ENCODE measurements at regions of chr5 and their contacts with region 1.

Region 1: GRCh38 chr5:98768160-98769005 is 5.1 kb upstream of the RGMB start:
- DNase-seq: peak; percentile 70 to 82
- H3K4me3 ChIP-seq: peak overlapping the region; percentile 52 to 91 (median 82)
- H3K27ac ChIP-seq: no peak overlapping the region
- H3K4me1 ChIP-seq: peaks cover 0 to 15% (median 9%) of the 10 kb centered on the region in 4 experiments; a peak in 5 of 7 replicates
- H3K27me3 ChIP-seq: peaks cover 0 to 19% (median 13%) of the 10 kb centered on the region in 4 experiments; a peak in 6 of 7 replicates
- CTCF ChIP-seq: peak; percentile 67 to 96 (median 72)
- EP300 ChIP-seq: no peak
- POLR2A ChIP-seq: no peak
- RAD21 ChIP-seq: peak; percentile 91 to 94

Region 2: GRCh38 chr5:98433022-98433421 is 335.4 kb before region 1 on chr5:
- CTCF ChIA-PET with region 1: interaction called, 16 read pairs
- POLR2A ChIA-PET with region 1: no interaction called
- DNase-seq: no peak
- H3K4me3 ChIP-seq: peak overlapping the region in 1 of 4 experiments; percentile 36; a peak in 1 of 8 replicates
- H3K27ac ChIP-seq: no peak overlapping the region
- H3K4me1 ChIP-seq: peaks cover 5 to 17% (median 8%) of the 10 kb centered on the region in 4 experiments; a peak in 6 of 7 replicates
- H3K27me3 ChIP-seq: no peaks in the 10 kb centered on the region
- CTCF ChIP-seq: no peak
- EP300 ChIP-seq: no peak
- POLR2A ChIP-seq: no peak
- RAD21 ChIP-seq: no peak

Region 3: GRCh38 chr5:98734646-98735045 is 33.7 kb before region 1 on chr5:
- CTCF ChIA-PET with region 1: interaction called, 10 read pairs
- POLR2A ChIA-PET with region 1: no interaction called
- DNase-seq: no peak
- H3K4me3 ChIP-seq: no peak overlapping the region
- H3K27ac ChIP-seq: no peak overlapping the region
- H3K4me1 ChIP-seq: no peaks in the 10 kb centered on the region
- H3K27me3 ChIP-seq: no peaks in the 10 kb centered on the region
- CTCF ChIP-seq: peak in 1 of 3 experiments; percentile 44; a peak in 1 of 4 replicates
- EP300 ChIP-seq: no peak
- POLR2A ChIP-seq: no peak
- RAD21 ChIP-seq: peak in 1 of 2 experiments; percentile 20; a peak in 1 of 4 replicates

Region 4: GRCh38 chr5:98750693-98751092 is 17.7 kb before region 1 on chr5:
- CTCF ChIA-PET with region 1: interaction called, 94 read pairs
- POLR2A ChIA-PET with region 1: interaction called, 21 read pairs
- DNase-seq: peak in 1 of 2 experiments; percentile 61
- H3K4me3 ChIP-seq: no peak overlapping the region
- H3K27ac ChIP-seq: no peak overlapping the region
- H3K4me1 ChIP-seq: peaks cover 0 to 13% (median 6%) of the 10 kb centered on the region in 4 experiments; a peak in 2 of 7 replicates
- H3K27me3 ChIP-seq: no peaks in the 10 kb centered on the region
- CTCF ChIP-seq: peak in 2 of 3 experiments; percentile 35 to 57; a peak in 2 of 4 replicates
- EP300 ChIP-seq: no peak
- POLR2A ChIP-seq: no peak
- RAD21 ChIP-seq: peak; percentile 56 to 64

Region 5: GRCh38 chr5:98786191-98786853 is 17.9 kb after region 1 on chr5:
- CTCF ChIA-PET with region 1: interaction called, 63 read pairs
- POLR2A ChIA-PET with region 1: interaction called, 6 read pairs
- DNase-seq: no peak
- H3K4me3 ChIP-seq: no peak overlapping the region
- H3K27ac ChIP-seq: no peak overlapping the region
- H3K4me1 ChIP-seq: peaks cover 0 to 16% (median 10%) of the 10 kb centered on the region in 4 experiments; a peak in 5 of 7 replicates
- H3K27me3 ChIP-seq: no peaks in the 10 kb centered on the region
- CTCF ChIP-seq: no peak
- EP300 ChIP-seq: no peak
- POLR2A ChIP-seq: no peak
- RAD21 ChIP-seq: no peak

Region 6: DNA sequence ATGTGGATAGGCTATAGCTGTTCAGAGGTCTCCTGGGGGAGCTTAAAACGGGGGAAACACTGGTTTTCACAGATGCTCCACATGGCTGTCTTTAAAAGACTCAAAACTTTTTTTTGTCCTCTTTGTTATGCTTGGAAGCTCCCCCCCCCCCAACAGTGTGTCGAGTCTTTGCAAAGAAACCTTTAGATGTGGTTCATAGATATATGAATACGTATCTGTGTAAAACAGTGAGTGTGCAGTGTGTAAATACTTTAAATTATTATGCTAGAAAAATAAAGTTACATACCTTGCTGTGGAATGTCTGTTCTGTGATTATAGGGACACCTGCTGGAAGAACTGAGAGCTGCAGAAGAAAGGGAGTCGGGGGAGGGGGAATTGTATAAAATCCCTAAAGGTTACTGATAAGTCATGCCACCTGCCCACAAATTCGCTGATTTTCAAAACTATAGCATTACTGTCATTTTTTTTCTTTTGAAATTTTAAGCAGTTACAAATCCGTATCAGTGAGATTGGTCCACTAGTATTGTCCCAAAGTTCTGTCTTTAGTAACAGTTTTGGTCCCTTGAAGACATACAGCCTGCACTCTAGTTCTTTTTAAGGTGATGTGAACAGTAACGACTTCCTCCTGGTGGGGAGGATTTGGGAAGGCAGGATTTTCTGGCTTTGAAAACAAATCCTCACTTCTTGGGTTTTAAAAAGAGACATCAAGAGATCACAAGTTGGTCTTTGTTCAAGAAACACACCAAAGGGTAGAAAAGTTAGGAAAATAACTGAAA is 28.0 kb after region 1 on chr5:
- CTCF ChIA-PET with region 1: interaction called, 81 read pairs
- POLR2A ChIA-PET with region 1: interaction called, 7 read pairs
- DNase-seq: peak in 1 of 2 experiments; percentile 71
- H3K4me3 ChIP-seq: peak overlapping the region in 1 of 4 experiments; percentile 6; a peak in 1 of 8 replicates
- H3K27ac ChIP-seq: no peak overlapping the region
- H3K4me1 ChIP-seq: peaks cover 3 to 6% (median 3%) of the 10 kb centered on the region in 4 experiments; a peak in 4 of 7 replicates
- H3K27me3 ChIP-seq: no peaks in the 10 kb centered on the region
- CTCF ChIP-seq: peak in 2 of 3 experiments; percentile 48 to 66; a peak in 2 of 4 replicates
- EP300 ChIP-seq: no peak
- POLR2A ChIP-seq: no peak
- RAD21 ChIP-seq: peak; percentile 71 to 74

Region 7: GRCh38 chr5:98827161-98827560 is 58.8 kb after region 1 on chr5:
- CTCF ChIA-PET with region 1: interaction called, 18 read pairs
- POLR2A ChIA-PET with region 1: interaction called, 3 read pairs
- DNase-seq: no peak
- H3K4me3 ChIP-seq: no peak overlapping the region
- H3K27ac ChIP-seq: no peak overlapping the region
- H3K4me1 ChIP-seq: no peaks in the 10 kb centered on the region; a peak in 1 of 7 replicates
- H3K27me3 ChIP-seq: peaks cover 0 to 1% (median 0%) of the 10 kb centered on the region in 4 experiments; a peak in 1 of 7 replicates
- CTCF ChIP-seq: peak in 2 of 3 experiments; percentile 49 to 54; a peak in 3 of 4 replicates
- EP300 ChIP-seq: no peak
- POLR2A ChIP-seq: no peak
- RAD21 ChIP-seq: peak; percentile 92 to 93

Region 8: GRCh38 chr5:99004960-99005359 is 236.6 kb after region 1 on chr5:
- CTCF ChIA-PET with region 1: no interaction called
- POLR2A ChIA-PET with region 1: no interaction called
- DNase-seq: no peak
- H3K4me3 ChIP-seq: no peak overlapping the region
- H3K27ac ChIP-seq: no peak overlapping the region
- H3K4me1 ChIP-seq: peaks cover 2 to 7% (median 4%) of the 10 kb centered on the region in 4 experiments; a peak in 5 of 7 replicates
- H3K27me3 ChIP-seq: no peaks in the 10 kb centered on the region
- CTCF ChIP-seq: no peak
- EP300 ChIP-seq: no peak
- POLR2A ChIP-seq: no peak
- RAD21 ChIP-seq: no peak